Calu3 (cell line): ENCODE measurements at regions of chr12 and their contacts with region 1.

Region 1: DNA sequence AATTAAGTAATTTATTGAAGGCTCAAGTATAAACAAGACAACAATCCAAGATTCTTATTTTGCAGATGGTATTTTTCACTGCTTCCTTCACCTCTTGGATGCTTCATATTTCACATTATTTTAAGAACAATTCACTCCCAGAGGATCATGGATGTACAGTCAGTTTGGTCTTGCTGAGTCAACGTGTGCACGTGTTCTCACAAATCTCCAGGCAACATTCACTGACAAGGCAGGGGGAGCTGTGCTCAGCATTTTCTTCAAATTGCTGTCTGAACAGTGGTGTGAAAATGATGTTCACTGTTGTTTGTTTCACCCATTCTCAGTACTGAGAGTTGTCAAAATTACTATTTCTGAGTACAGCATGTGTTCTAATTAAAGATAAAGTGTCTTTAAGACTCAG is 118.3 kb upstream of the SLC38A4 start:
- DNase-seq: no peak
- H3K4me3 Mint-ChIP-seq: no peak overlapping the region
- H3K27ac Mint-ChIP-seq: no peak overlapping the region
- H3K4me1 Mint-ChIP-seq: peaks cover 9% of the 10 kb centered on the region
- H3K27me3 Mint-ChIP-seq: no peaks in the 10 kb centered on the region
- CTCF ChIP-seq: no peak

Region 2: GRCh38 chr12:46921764-46922133 is 22.3 kb before region 1 on chr12:
- CTCF ChIA-PET with region 1: no interaction called
- intact Hi-C with region 1: no loop called
- DNase-seq: no peak
- H3K4me3 Mint-ChIP-seq: no peak overlapping the region
- H3K27ac Mint-ChIP-seq: no peak overlapping the region
- H3K4me1 Mint-ChIP-seq: no peaks in the 10 kb centered on the region
- H3K27me3 Mint-ChIP-seq: no peaks in the 10 kb centered on the region
- CTCF ChIP-seq: no peak

Region 3: GRCh38 chr12:46983393-46984266 is 39.5 kb after region 1 on chr12:
- CTCF ChIA-PET with region 1: interaction called, 3 read pairs
- intact Hi-C with region 1: loop called (anchors 5 kb)
- DNase-seq: peak; percentile 20
- H3K4me3 Mint-ChIP-seq: no peak overlapping the region
- H3K27ac Mint-ChIP-seq: no peak overlapping the region
- H3K4me1 Mint-ChIP-seq: peaks cover 9% of the 10 kb centered on the region
- H3K27me3 Mint-ChIP-seq: no peaks in the 10 kb centered on the region
- CTCF ChIP-seq: peak; percentile 32